ENCODE measurements at regions of chr3 and their contacts with region 1.

Region 1: DNA sequence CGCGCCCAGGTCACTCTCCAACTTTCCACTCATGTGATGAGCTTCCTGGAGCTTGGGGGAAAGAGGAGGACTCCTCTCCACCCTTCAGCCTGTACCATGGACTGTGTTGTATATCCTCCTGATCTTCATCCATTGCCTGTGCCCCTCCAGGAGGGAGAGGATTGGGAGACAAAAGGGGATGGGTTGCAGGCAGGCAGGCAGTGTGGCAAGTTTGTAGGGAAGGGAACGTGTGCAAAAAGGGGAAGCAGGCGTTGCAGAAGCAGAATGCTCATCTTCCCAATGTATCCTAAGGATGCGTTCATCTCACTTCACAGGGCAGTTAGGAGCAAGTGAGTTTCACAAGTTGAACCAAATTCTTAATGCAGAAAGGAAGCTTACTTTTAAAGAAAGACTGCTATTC is 28.1 kb upstream of the GHSR start:
- DNase-seq: no peak
- ATAC-seq: no peak
- H3K4me3 ChIP-seq: peak overlapping the region; percentile 55
- H3K27ac ChIP-seq: no peak overlapping the region
- H3K4me1 ChIP-seq: no peaks in the 10 kb centered on the region
- H3K27me3 ChIP-seq: no peaks in the 10 kb centered on the region
- CTCF ChIP-seq: no peak

Region 2: GRCh38 chr3:172367205-172368105 is 108.9 kb before region 1 on chr3:
- intact Hi-C with region 1: loop called in 1 of 2 experiments (anchors 10 kb)
- DNase-seq: no peak
- ATAC-seq: no peak
- H3K4me3 ChIP-seq: no peak overlapping the region
- H3K27ac ChIP-seq: no peak overlapping the region
- H3K4me1 ChIP-seq: peaks cover 32% of the 10 kb centered on the region
- H3K27me3 ChIP-seq: no peaks in the 10 kb centered on the region
- CTCF ChIP-seq: no peak

Region 3: GRCh38 chr3:172522871-172523818 is 46.8 kb after region 1 on chr3 and contains the start of gene TNFSF10:
- intact Hi-C with region 1: no loop called
- DNase-seq: peak; percentile 39 to 66
- ATAC-seq: peak; percentile 55 to 82 (median 59)
- H3K4me3 ChIP-seq: peak within 1 kb of the TSS; percentile 68
- H3K27ac ChIP-seq: peak within 1 kb of the TSS; percentile 61
- H3K4me1 ChIP-seq: no peaks in the 10 kb centered on the region
- H3K27me3 ChIP-seq: no peaks in the 10 kb centered on the region
- CTCF ChIP-seq: no peak
- total RNA-seq, gene TNFSF10: 5.5 to 18.6 (median 9.2) TPM

Region 4: GRCh38 chr3:172646439-172647015 is 170.2 kb after region 1 on chr3:
- intact Hi-C with region 1: no loop called
- DNase-seq: no peak
- ATAC-seq: no peak
- H3K4me3 ChIP-seq: no peak overlapping the region
- H3K27ac ChIP-seq: no peak overlapping the region
- H3K4me1 ChIP-seq: no peaks in the 10 kb centered on the region
- H3K27me3 ChIP-seq: no peaks in the 10 kb centered on the region
- CTCF ChIP-seq: no peak

Measured in psoas muscle (tissue), 8 donors.